Mammary epithelial cell (primary cell): ENCODE measurements at regions of chr17 and their contacts with region 1.

Region 1: GRCh38 chr17:79684132-79684985 is 46.4 kb upstream of the ENPP7 start:
- DNase-seq: no peak
- H3K4me3 ChIP-seq: no peak overlapping the region
- H3K27ac ChIP-seq: no peak overlapping the region
- H3K4me1 ChIP-seq: no peaks in the 10 kb centered on the region
- H3K27me3 ChIP-seq: no peaks in the 10 kb centered on the region
- CTCF ChIP-seq: no peak

Region 2: GRCh38 chr17:79626156-79626890 is 58.0 kb before region 1 on chr17:
- CTCF ChIA-PET with region 1: no interaction called
- dilution Hi-C with region 1: loop called (anchors 5 kb)
- in situ Hi-C with region 1: no loop called
- intact Hi-C with region 1: no loop called
- DNase-seq: no peak
- H3K4me3 ChIP-seq: no peak overlapping the region
- H3K27ac ChIP-seq: no peak overlapping the region
- H3K4me1 ChIP-seq: no peaks in the 10 kb centered on the region
- H3K27me3 ChIP-seq: no peaks in the 10 kb centered on the region
- CTCF ChIP-seq: no peak